Transverse colon (tissue), 4 donors: ENCODE measurements at regions of chr11 and their contacts with region 1.

Region 1: DNA sequence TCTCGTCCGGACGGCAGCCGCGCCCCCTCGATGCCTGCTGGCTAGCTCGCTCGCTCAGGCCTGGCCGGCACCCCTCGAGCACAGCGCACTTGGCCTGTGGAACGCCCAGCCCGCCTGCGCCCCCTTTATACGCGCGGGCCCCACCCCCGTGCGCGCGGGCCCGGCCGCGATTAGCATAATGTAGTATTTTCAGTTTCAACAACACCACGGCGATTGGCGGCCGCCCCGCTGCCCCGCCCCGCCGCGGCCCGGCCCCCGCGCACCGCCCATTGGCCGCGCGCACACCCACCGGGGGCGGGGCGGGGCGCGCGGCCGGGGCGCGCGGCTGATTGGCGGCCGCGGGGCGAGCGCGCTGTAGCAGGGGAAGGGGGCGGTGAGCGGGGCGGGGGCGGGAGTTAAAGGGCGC is at the start of gene CDKN1C:
- DNase-seq: peak; percentile 89
- H3K4me3 ChIP-seq: peak within 1 kb of the TSS; percentile 62 to 86 (median 72)
- H3K27ac ChIP-seq: peak within 1 kb of the TSS; percentile 75 to 91 (median 82)
- H3K4me1 ChIP-seq: peaks cover 11 to 38% (median 28%) of the 10 kb centered on the region in 4 donors
- H3K27me3 ChIP-seq: peaks cover 17% of the 10 kb centered on the region
- CTCF ChIP-seq: no peak
- EP300 ChIP-seq: no peak
- POLR2A ChIP-seq: peak; percentile 86
- total RNA-seq, gene CDKN1C: 12.4 to 40.0 (median 27.7) TPM

Region 2: GRCh38 chr11:2305140-2305840 is 580.4 kb before region 1 on chr11:
- in situ Hi-C with region 1: loop called in 1 of 4 experiments (anchors 25 kb)
- intact Hi-C with region 1: no loop called
- DNase-seq: peak; percentile 88
- H3K4me3 ChIP-seq: no peak overlapping the region
- H3K27ac ChIP-seq: peak overlapping the region; percentile 84 to 94 (median 88)
- H3K4me1 ChIP-seq: peaks cover 16 to 54% (median 29%) of the 10 kb centered on the region in 4 donors
- H3K27me3 ChIP-seq: no peaks in the 10 kb centered on the region
- CTCF ChIP-seq: peak; percentile 87 to 97 (median 94)
- EP300 ChIP-seq: no peak
- POLR2A ChIP-seq: no peak

Region 3: DNA sequence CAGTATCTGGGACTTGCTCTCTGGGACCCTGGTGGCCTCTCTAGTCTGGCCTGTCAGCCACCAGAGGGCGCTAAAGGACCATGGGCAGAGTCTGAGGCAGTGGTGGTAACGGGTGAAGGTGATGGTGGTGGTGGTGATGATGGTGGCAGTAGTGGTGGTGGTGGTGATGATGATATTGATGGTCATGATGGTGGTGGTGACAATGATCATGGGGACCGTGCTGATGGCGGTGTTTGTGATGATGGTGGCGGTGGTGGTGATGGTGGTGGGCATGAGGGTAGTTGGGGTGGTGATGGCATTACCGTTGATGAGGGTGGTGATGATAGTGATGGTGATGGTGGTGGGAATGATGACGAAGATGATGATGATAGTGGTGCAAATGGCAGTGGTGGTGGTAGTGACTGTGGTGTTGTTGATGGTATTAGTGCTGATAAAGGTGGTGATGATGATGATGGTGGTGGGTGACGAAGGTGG is 457.3 kb before region 1 on chr11:
- in situ Hi-C with region 1: loop called in 3 of 4 experiments (anchors 10 to 25 kb)
- intact Hi-C with region 1: loop called (anchors 10 kb)
- DNase-seq: peak; percentile 88
- H3K4me3 ChIP-seq: no peak overlapping the region
- H3K27ac ChIP-seq: no peak overlapping the region
- H3K4me1 ChIP-seq: peaks cover 0 to 5% (median 3%) of the 10 kb centered on the region in 4 donors
- H3K27me3 ChIP-seq: peaks cover 27% of the 10 kb centered on the region
- CTCF ChIP-seq: peak; percentile 81 to 99 (median 89)
- EP300 ChIP-seq: no peak
- POLR2A ChIP-seq: no peak

Region 4: GRCh38 chr11:2708151-2708581 is 177.5 kb before region 1 on chr11:
- in situ Hi-C with region 1: no loop called
- intact Hi-C with region 1: loop called (anchors 5 kb)
- DNase-seq: no peak
- H3K4me3 ChIP-seq: no peak overlapping the region
- H3K27ac ChIP-seq: peak overlapping the region; percentile 46 to 86 (median 76)
- H3K4me1 ChIP-seq: peaks cover 4 to 15% (median 5%) of the 10 kb centered on the region in 4 donors
- H3K27me3 ChIP-seq: no peaks in the 10 kb centered on the region
- CTCF ChIP-seq: no peak
- EP300 ChIP-seq: no peak
- POLR2A ChIP-seq: no peak

Region 5: GRCh38 chr11:2825889-2826678 is 59.6 kb before region 1 on chr11:
- in situ Hi-C with region 1: no loop called
- intact Hi-C with region 1: loop called (anchors 5 kb)
- DNase-seq: peak; percentile 63
- H3K4me3 ChIP-seq: no peak overlapping the region
- H3K27ac ChIP-seq: peak overlapping the region; percentile 76 to 95 (median 83)
- H3K4me1 ChIP-seq: peaks cover 15 to 28% (median 21%) of the 10 kb centered on the region in 4 donors
- H3K27me3 ChIP-seq: no peaks in the 10 kb centered on the region
- CTCF ChIP-seq: no peak
- EP300 ChIP-seq: no peak
- POLR2A ChIP-seq: no peak